ENCODE measurements at regions of chr6 and their contacts with region 1.

Region 1: DNA sequence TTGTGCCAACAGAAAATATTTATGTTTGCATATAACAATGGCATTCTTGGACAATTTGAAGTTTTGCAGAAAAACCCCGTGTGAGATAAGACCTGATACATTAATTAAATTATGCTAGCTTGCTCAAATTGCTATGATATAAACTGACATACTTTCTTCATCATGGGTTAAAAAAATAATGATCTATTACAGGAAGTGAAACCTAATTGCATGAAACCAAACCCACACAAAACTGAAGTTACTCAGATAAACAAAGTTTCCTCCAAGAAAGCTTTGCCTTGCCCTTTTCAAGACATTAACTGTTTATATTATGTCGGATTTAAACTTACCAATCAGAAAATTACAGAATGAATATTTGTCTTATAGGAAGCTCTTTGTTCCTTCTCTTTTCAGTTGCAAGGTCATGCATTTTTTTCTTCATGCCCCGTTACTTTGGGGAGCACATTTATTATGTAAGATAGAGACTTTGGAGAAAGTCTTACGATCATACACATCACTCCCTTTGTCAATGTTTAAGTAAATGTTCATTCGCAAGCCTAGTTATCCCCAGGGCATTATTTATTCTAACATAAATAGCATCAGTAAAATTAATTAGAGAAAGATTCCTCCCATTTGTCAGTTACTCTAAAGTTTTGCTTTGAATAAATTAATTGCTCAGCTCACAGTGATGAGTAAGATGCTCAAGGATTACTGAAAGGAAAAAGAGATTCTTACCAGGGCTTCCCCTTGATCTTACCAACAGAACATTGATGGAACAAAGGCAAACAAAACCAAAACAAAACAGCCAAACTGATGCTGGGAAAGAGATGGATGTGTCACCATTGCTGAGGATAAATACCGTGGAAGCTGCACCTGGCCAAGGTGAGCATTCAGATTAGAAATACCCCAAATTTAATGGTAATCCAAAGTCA is 14.8 kb upstream of the TMEM244 start:
- DNase-seq: peak; percentile 40
- ATAC-seq: peak; percentile 92
- H3K4me3 ChIP-seq: peak overlapping the region; percentile 3; the same call in 1 of the 2 replicates
- H3K27ac ChIP-seq: peak overlapping the region; percentile 40
- H3K4me1 ChIP-seq: peaks cover 9% of the 10 kb centered on the region; the same call in 1 of the 2 replicates
- H3K27me3 ChIP-seq: no peaks in the 10 kb centered on the region
- CTCF ChIP-seq: no peak
- EP300 ChIP-seq: peak in 1 of 2 experiments; percentile 71; a peak in 2 of 4 replicates
- POLR2A ChIP-seq: no peak
- RAD21 ChIP-seq: no peak

Region 2: GRCh38 chr6:129555206-129555832 is 320.5 kb before region 1 on chr6:
- CTCF ChIA-PET with region 1: no interaction called
- POLR2A ChIA-PET with region 1: no interaction called
- RAD21 ChIA-PET with region 1: no interaction called
- SMC1A ChIA-PET with region 1: no interaction called
- in situ Hi-C with region 1: no loop called
- intact Hi-C with region 1: no loop called
- DNase-seq: no peak
- ATAC-seq: no peak
- H3K4me3 ChIP-seq: no peak overlapping the region
- H3K27ac ChIP-seq: no peak overlapping the region
- H3K4me1 ChIP-seq: no peaks in the 10 kb centered on the region
- H3K27me3 ChIP-seq: no peaks in the 10 kb centered on the region
- CTCF ChIP-seq: no peak
- EP300 ChIP-seq: no peak
- POLR2A ChIP-seq: no peak
- RAD21 ChIP-seq: no peak

Region 3: DNA sequence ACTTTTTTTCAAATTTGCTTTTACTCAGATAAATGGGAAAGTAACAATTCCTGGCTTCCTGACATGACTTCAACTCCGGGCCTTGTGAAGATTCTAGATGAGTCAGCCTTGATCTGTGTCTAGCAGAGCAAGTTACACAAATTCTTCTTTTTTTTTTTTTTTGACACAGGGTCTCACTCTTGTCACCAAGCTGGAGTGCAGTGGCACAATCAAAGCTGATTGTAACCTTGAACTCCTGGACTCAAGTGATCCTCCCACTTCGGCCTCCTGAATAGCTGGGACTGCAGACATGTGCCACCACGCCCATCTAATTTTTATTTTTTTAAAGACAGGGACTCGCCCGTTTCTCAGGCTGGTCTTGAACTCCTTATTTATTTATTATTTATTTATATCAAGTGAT is 158.6 kb before region 1 on chr6:
- CTCF ChIA-PET with region 1: no interaction called
- POLR2A ChIA-PET with region 1: interaction called, 13 read pairs
- RAD21 ChIA-PET with region 1: interaction called, 3 read pairs
- SMC1A ChIA-PET with region 1: no interaction called
- in situ Hi-C with region 1: no loop called
- intact Hi-C with region 1: no loop called
- DNase-seq: no peak
- ATAC-seq: no peak
- H3K4me3 ChIP-seq: no peak overlapping the region
- H3K27ac ChIP-seq: no peak overlapping the region
- H3K4me1 ChIP-seq: no peaks in the 10 kb centered on the region
- H3K27me3 ChIP-seq: no peaks in the 10 kb centered on the region
- CTCF ChIP-seq: no peak
- EP300 ChIP-seq: no peak
- POLR2A ChIP-seq: no peak
- RAD21 ChIP-seq: no peak

Region 4: GRCh38 chr6:129860908-129861665 is 14.8 kb before region 1 on chr6 and contains the start of gene TMEM244:
- CTCF ChIA-PET with region 1: interaction called, 9 read pairs
- POLR2A ChIA-PET with region 1: interaction called, 8 read pairs
- RAD21 ChIA-PET with region 1: interaction called, 14 read pairs
- SMC1A ChIA-PET with region 1: interaction called, 10 read pairs
- in situ Hi-C with region 1: no loop called
- intact Hi-C with region 1: no loop called
- DNase-seq: no peak
- ATAC-seq: peak; percentile 83
- H3K4me3 ChIP-seq: peak within 1 kb of the TSS; percentile 28; the same call in 1 of the 2 replicates
- H3K27ac ChIP-seq: no peak within 1 kb of the TSS
- H3K4me1 ChIP-seq: no peaks in the 10 kb centered on the region; the same call in 1 of the 2 replicates
- H3K27me3 ChIP-seq: no peaks in the 10 kb centered on the region
- CTCF ChIP-seq: no peak
- EP300 ChIP-seq: no peak
- POLR2A ChIP-seq: no peak
- RAD21 ChIP-seq: no peak
- polyA plus RNA-seq, gene TMEM244: not detected

Measured in GM12878 (cell line).